HAP-1 (cell line): ENCODE measurements at regions of chr16 and their contacts with region 1.

Region 1: GRCh38 chr16:84484579-84485254 is 19.7 kb downstream of the MEAK7 start:
- DNase-seq: peak; percentile 30 to 73
- H3K4me3 ChIP-seq: no peak overlapping the region
- H3K4me1 ChIP-seq: no peaks in the 10 kb centered on the region
- H3K27me3 ChIP-seq: no peaks in the 10 kb centered on the region

Region 2: GRCh38 chr16:83967806-83968305 is 516.9 kb before region 1 on chr16 and contains the start of gene NECAB2:
- in situ Hi-C with region 1: loop called (anchors 10 kb)
- DNase-seq: peak in 1 of 2 experiments; percentile 76
- H3K4me3 ChIP-seq: peak within 1 kb of the TSS; percentile 16
- H3K4me1 ChIP-seq: no peaks in the 10 kb centered on the region
- H3K27me3 ChIP-seq: no peaks in the 10 kb centered on the region

Region 3: GRCh38 chr16:84084570-84085270 is 400.0 kb before region 1 on chr16:
- in situ Hi-C with region 1: loop called (anchors 10 kb)
- DNase-seq: peak; percentile 48 to 82
- H3K4me3 ChIP-seq: no peak overlapping the region
- H3K4me1 ChIP-seq: no peaks in the 10 kb centered on the region
- H3K27me3 ChIP-seq: no peaks in the 10 kb centered on the region

Region 4: DNA sequence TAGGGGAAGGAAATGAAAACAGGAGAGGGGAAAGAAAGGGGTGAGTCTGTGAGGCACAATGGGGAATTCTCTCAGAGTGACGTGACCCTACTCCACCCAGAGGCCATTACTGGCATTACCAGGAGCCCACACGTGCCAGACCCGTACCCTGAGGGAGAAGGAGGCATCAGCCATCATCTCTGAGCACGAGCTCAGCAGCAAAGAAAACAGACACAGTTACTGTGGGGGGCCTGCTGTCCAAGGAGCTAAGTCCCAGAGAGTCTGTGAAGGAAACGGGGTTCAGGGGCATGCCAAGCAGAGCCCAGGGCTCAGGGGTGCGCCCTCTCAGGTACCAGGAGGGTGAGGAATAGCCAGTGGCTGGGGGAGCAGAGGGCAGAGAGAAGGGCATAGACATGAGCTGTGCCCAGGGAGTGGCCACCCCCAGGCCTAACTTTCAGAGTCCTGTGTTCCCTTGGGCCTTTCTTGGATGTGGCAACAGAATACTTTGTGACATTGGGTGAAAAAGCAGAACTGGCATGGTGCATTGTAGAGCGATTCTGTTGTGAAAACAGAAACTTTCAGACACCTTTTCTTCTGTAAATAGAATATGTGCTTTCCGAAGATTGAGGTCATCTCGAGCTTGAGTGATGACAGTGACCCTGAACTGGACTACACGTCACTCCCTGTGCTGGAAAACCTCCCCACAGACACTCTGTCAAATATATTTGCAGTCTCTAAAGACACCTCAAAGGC is 309.2 kb before region 1 on chr16:
- in situ Hi-C with region 1: no loop called
- DNase-seq: no peak
- H3K4me3 ChIP-seq: no peak overlapping the region
- H3K4me1 ChIP-seq: peaks cover 4% of the 10 kb centered on the region; the same call in 1 of the 2 replicates
- H3K27me3 ChIP-seq: no peaks in the 10 kb centered on the region

Region 5: GRCh38 chr16:84562174-84562815 is 77.6 kb after region 1 on chr16:
- in situ Hi-C with region 1: no loop called
- DNase-seq: no peak
- H3K4me3 ChIP-seq: no peak overlapping the region
- H3K4me1 ChIP-seq: peaks cover 7% of the 10 kb centered on the region; the same call in 1 of the 2 replicates
- H3K27me3 ChIP-seq: 0 out of 2 replicates have a peak, but pooled peaks cover 3% of the 10 kb centered on the region

Region 6: GRCh38 chr16:84629580-84629979 is 144.9 kb after region 1 on chr16:
- in situ Hi-C with region 1: no loop called
- DNase-seq: no peak
- H3K4me3 ChIP-seq: no peak overlapping the region
- H3K4me1 ChIP-seq: peaks cover 13% of the 10 kb centered on the region
- H3K27me3 ChIP-seq: no peaks in the 10 kb centered on the region

Region 7: GRCh38 chr16:84864326-84864955 is 379.7 kb after region 1 on chr16:
- in situ Hi-C with region 1: no loop called
- DNase-seq: no peak
- H3K4me3 ChIP-seq: no peak overlapping the region
- H3K4me1 ChIP-seq: no peaks in the 10 kb centered on the region
- H3K27me3 ChIP-seq: no peaks in the 10 kb centered on the region; the same call in 1 of the 2 replicates